ENCODE measurements at regions of chr1 and their contacts with region 1.

Region 1: GRCh38 chr1:175043824-175044223 is 20.6 kb upstream of the MRPS14 start:
- ATAC-seq: no peak
- H3K4me3 ChIP-seq: no peak overlapping the region
- H3K27ac ChIP-seq: no peak overlapping the region
- H3K4me1 ChIP-seq: no peaks in the 10 kb centered on the region

Region 2: DNA sequence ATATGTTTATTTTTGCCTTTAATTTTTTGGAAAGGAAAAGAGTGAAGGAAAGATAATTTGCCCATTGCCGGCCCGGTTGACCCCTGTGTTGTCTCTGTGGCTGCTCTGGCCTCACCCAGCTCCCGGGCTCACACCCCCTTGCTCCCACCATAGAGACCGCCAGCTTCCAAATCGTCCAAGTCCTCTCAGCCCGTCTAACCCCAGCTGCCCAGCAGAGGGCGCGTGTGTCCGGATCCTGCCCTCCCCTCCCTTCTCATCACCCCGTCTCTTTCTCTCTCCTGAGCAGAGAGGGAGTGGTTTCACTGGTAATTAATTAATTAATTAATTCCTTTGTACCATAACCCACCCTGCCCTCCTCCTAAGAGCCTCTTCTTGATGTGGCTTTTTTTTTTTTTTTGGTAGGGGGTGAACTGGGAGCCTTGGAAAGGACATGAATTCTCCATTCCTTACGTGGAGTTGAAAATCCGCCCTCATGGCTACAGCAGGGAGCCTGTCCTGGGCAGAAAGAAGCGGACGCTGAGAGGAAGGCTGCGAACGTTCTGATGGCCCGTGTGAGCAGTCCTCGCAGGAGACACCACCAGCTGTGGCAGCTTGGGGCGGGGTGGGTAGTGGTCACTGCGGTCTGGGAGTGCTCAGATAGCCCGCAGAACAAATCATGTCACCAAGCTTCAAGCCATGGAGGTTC is 102.8 kb after region 1 on chr1:
- in situ Hi-C with region 1: loop called in 1 of 9 experiments (anchors 25 kb)
- ATAC-seq: peak; percentile 75 to 90 (median 88)
- H3K4me3 ChIP-seq: no peak overlapping the region
- H3K27ac ChIP-seq: no peak overlapping the region
- H3K4me1 ChIP-seq: peaks cover 3 to 7% of the 10 kb centered on the region in 2 donors

Region 3: GRCh38 chr1:175319418-175320230 is 275.8 kb after region 1 on chr1:
- in situ Hi-C with region 1: loop called in 2 of 9 experiments (anchors 10 to 25 kb)
- ATAC-seq: peak; percentile 60 to 99 (median 80)
- H3K4me3 ChIP-seq: no peak overlapping the region
- H3K27ac ChIP-seq: no peak overlapping the region
- H3K4me1 ChIP-seq: no peaks in the 10 kb centered on the region

Region 4: GRCh38 chr1:175338387-175339135 is 294.7 kb after region 1 on chr1:
- in situ Hi-C with region 1: loop called in 2 of 9 experiments (anchors 25 kb)
- ATAC-seq: peak in 4 of 8 experiments; percentile 43 to 75 (median 68)
- H3K4me3 ChIP-seq: no peak overlapping the region
- H3K27ac ChIP-seq: no peak overlapping the region
- H3K4me1 ChIP-seq: no peaks in the 10 kb centered on the region

Region 5: GRCh38 chr1:176843352-176844297 is 1799.8 kb after region 1 on chr1:
- in situ Hi-C with region 1: loop called in 1 of 9 experiments (anchors 25 kb)
- ATAC-seq: peak in 7 of 8 experiments; percentile 37 to 93 (median 58)
- H3K4me3 ChIP-seq: no peak overlapping the region
- H3K27ac ChIP-seq: no peak overlapping the region
- H3K4me1 ChIP-seq: peaks cover 0 to 14% of the 10 kb centered on the region in 2 donors

Region 6: DNA sequence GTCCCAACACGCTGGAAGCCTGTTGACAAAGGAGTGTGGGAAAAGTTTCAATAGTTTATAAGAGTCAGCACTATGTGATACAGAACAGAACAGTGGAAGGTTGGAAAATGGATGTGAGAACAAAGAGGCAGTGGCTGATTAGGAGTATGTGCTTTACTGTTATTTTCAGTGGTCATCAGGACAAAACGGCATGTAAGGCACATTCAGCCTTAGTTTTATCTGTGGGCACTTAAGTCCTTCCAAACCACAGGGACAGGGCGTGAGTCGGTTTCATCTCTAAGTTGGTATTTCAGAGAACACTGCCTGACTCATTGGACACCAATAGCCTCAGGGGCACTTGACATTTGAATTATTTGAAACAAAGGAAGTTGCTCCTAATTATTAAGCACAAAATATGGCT is 1813.8 kb after region 1 on chr1:
- in situ Hi-C with region 1: loop called in 2 of 9 experiments (anchors 25 kb)
- ATAC-seq: peak in 2 of 8 experiments; percentile 69 to 86
- H3K4me3 ChIP-seq: no peak overlapping the region
- H3K27ac ChIP-seq: no peak overlapping the region
- H3K4me1 ChIP-seq: peaks cover 8% of the 10 kb centered on the region in 2 donors

Measured in motor neuron (in vitro differentiated cells).